A673 (cell line): ENCODE measurements at regions of chr6 and their contacts with region 1.

Region 1: GRCh38 chr6:16969699-16970655 is 131.9 kb upstream of the STMND1 start:
- DNase-seq: peak; percentile 73
- H3K4me3 ChIP-seq: peak overlapping the region; percentile 20
- H3K27ac ChIP-seq: peak overlapping the region; percentile 58
- H3K4me1 ChIP-seq: peaks cover 35% of the 10 kb centered on the region
- H3K27me3 ChIP-seq: no peaks in the 10 kb centered on the region
- CTCF ChIP-seq: no peak

Region 2: DNA sequence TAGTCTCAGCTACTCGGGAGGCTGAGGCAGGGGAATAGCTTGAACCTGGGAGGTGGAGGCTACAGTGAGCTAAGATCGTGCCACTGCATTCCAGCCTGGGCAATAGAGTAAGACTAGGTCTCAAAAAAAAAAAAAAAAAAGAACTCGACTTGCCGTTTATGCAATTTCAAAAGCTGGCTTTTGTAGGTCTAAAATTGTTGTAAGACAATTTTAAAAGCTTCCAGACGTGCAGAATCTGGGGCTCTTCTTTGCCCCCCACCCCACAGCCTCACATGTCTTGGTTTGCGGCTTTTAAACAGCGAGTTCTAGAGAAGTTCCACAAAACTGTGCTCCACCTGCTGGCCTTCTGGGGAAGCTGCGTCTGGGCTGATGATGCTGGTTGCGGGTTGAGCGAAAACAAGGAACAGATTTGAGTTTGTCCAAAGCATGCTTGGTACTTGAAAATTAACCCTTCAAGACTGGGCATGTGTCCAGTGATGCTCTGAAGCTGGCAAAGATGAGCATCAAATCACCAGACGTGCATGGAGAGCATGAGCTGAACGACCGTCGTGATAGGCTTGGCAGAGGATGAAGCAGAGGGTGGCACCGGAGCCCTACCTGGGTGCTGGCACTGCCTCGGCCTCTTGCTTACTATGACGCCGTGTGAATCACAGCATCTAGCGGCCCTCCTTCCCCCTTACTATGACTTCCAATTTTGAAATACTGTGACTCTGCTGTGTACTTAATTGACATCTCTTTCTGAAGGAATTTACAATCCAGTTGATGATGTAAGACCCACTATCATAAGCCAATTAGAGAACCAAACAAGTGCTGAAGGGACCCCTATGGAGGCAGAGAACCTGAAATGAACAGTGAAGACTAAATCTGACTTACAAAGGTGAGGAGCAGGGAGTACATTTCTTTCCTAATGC is 560.2 kb before region 1 on chr6:
- CTCF ChIA-PET with region 1: no interaction called
- POLR2A ChIA-PET with region 1: interaction called, 11 read pairs
- intact Hi-C with region 1: no loop called
- DNase-seq: peak; percentile 80
- H3K4me3 ChIP-seq: peak overlapping the region; percentile 13
- H3K27ac ChIP-seq: no peak overlapping the region
- H3K4me1 ChIP-seq: peaks cover 26% of the 10 kb centered on the region
- H3K27me3 ChIP-seq: no peaks in the 10 kb centered on the region
- CTCF ChIP-seq: peak; percentile 94